GM10248 (cell line): ENCODE measurements at regions of chr1 and their contacts with region 1.

Region 1: GRCh38 chr1:84996846-84997666 is at the start of gene MCOLN2:
- DNase-seq: peak; percentile 88
- CTCF ChIP-seq: peak; percentile 21

Region 2: GRCh38 chr1:84653130-84653677 is 343.9 kb before region 1 on chr1:
- CTCF ChIA-PET with region 1: no interaction called
- POLR2A ChIA-PET with region 1: no interaction called
- DNase-seq: no peak
- CTCF ChIP-seq: no peak

Region 3: DNA sequence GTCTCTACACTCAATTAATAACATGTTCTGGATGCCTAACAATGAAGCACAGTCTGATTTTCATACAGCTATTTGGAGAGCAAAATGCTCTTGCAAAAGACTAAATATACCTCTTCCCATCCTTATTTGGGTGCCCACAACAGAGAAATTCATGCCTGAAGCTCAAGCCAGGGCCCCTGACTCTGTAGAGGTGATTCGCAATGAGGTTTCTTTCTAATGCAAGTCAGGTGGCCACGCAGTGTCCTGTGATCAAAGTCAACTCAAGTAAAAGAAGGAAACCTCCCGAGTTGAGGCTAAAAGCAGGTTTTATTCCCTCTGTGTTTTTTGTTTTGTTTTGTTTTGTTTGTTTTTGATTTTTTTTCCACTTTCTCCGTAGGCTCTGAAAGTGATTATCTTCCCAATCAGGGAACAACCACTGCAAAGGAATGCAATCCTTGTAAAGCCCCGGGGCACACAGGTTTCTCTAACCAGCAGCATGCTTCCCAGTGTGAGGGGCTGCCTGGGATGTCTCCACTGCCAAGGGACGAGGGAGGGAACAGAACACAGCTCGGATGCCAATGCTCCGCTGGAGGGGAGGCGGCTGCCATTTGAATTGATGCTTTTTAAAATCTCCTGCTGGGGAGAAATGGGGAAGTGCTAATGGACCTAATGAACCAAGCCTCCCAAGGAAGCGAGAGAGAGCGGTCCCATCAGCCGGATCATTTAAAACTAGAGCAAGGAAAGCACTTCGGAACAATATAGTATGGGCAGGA is 233.0 kb before region 1 on chr1:
- CTCF ChIA-PET with region 1: no interaction called
- POLR2A ChIA-PET with region 1: no interaction called
- DNase-seq: no peak
- CTCF ChIP-seq: no peak

Region 4: DNA sequence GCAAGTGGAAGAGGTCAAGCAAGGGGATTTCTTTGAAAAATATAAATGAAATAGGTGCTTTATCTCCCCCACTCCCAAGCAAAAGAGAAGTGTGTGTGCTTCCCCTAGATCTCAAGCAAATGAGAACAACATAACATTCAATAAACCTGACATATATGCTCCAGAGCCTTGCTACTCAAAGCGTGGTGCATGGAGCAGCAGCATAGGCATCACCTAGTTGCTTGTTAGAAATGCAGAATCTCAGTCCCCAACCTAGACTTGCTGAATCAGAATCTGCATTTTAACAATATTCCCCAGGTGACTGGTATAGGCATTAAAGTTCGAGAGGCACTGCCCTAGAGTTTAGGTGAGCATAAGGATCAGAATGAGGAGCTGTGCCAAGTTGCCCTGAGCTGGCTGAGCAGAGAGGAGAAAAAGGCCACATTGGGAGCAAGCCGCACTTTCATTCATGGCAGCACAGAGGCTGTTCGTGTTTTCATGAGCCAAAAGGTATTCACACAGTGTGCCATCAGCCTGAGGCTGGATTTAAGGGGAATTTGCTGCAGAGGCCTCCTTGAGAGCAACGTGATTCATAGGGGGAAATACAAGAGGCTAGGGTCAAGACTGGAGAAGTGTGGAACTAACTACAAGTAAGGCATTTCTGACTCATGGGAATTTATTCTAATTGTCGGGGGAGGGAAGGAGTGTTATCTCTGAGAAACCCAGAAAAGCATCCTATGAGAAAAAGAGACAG is 89.8 kb before region 1 on chr1:
- CTCF ChIA-PET with region 1: no interaction called
- POLR2A ChIA-PET with region 1: no interaction called
- DNase-seq: no peak
- CTCF ChIP-seq: no peak

Region 5: GRCh38 chr1:84973498-84974334 is 23.3 kb before region 1 on chr1:
- CTCF ChIA-PET with region 1: interaction called, 13 read pairs
- POLR2A ChIA-PET with region 1: interaction called, 5 read pairs
- DNase-seq: no peak
- CTCF ChIP-seq: peak; percentile 19